GM10248 (cell line): ENCODE measurements at regions of chr11 and their contacts with region 1.

Region 1: DNA sequence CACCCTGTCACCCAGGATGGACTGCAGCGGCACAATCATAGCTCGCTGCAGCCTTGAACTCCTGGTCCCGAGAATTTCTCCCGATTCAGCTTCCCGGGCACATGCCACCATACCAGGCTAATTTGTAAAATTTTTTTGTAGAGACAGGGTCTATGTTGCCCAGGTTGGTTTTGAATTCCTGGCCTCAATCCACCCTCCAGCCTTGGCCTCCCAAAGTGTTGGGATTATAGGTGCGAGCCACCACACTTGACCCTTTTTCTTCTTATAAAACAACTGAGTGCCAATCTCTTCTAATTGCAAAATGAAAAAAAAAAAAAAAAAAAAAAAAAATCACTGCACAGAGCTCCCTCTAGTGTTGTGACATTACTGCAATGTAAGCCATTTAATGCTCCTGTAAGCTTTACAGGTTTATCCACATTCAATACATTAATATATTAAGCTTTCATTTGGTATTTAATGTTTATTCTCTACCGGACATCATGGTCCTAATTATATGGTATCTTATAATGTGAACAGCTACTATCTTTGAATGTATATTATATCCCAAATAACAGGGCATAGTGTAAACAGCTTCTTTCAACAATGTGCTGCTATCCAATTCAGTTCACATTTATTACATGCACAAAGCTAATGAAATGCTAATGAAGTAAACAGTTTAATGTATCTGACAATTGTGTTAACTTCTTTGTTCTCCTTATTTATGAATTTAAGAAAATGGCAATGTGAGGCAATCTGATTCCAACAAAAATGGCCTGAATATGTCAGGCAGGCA is 44.6 kb downstream of the COPB1 start:
- DNase-seq: peak; percentile 34
- CTCF ChIP-seq: peak; percentile 46

Region 2: DNA sequence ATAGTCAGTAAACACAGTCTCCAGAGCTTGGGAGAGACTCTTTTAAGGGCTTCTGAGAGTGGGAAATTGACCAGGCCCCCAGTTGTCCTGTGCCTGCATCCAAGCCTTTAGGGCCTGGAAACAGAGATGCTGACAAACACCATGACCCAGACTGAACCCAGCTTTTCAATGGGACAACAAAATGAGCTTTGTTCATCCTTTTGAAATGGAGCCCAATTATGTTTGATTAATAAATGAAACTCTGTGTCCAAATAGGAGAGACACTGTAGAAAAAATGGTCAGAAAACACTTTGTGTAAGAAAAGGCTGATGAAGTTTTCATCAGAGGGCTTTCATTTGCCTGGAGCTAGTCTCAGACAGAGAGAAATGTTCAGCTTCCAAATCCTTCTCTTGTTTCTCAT is 242.1 kb before region 1 on chr11:
- CTCF ChIA-PET with region 1: no interaction called
- POLR2A ChIA-PET with region 1: no interaction called
- DNase-seq: no peak
- CTCF ChIP-seq: no peak

Region 3: DNA sequence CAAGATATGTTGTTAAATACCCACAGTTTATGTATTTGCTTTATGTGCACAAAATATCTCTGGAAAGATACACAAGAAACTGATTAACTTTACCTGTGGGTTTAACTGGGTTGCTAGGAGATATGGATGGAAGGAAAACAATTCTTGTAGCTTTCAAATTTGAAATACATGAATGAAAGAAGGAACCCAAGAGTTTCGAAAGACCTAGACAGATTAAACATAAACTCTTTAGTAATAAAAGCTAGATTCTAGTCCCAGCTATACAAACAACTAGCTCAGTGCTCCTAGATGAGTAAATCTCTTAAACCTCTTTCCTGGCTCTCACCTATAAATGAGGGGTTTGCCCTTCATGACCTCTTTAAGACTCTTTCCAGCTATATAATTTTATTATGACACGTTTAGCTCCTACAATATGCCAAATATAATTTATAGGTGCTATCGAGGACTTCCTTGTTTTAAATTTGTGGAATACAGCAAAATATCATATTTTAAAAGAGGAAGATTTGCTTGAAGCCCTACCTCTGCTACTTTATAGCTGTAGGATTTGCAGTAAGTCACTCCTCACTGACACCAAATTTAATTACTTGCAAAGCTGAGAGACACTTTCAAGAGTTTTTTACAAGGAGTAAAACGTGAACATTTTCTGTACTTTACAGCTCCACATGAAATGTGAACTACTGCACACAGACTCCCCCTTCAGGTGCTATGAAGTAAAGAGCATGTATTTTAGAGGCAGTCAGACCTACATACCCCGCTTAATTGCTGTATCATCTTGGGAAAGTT is 146.7 kb before region 1 on chr11:
- CTCF ChIA-PET with region 1: interaction called, 109 read pairs
- POLR2A ChIA-PET with region 1: no interaction called
- DNase-seq: no peak
- CTCF ChIP-seq: peak; percentile 72

Region 4: DNA sequence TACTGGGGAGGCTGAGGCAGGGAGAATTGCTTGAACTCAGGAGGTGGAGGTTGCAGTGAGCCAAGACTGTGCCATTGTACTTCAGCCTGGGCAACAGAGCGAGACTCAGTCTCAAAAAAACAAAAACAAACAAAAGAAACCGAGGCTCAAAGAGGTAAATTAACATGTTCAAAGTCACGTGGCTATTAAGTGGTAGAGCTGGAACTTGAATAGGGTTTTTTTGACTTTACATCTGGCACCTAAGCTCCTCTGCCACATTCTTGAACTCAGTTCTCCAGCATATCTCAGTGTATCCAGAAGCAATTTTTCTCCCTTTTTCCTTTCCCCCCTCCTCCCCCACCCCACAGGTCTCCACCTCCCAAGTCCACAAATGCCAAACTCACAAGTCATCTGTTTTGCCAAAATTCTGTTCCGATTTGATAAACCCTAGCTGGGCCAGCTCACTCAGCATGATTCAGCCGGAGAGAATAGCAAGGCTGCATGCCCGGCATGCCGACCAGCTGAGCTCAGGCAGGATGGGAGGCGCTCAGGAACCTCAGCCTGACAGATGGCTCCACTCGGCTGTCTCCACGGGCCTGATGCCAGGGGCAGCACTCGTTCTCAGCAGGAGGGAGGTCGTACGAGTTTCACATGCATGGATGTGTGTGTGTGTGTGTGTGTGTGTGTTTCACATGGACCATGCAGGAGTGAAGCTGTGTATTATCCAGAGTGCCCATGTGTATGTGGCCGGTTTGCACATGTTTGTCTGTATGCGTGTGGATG is 32.8 kb before region 1 on chr11:
- CTCF ChIA-PET with region 1: interaction called, 12 read pairs
- POLR2A ChIA-PET with region 1: no interaction called
- DNase-seq: no peak
- CTCF ChIP-seq: no peak

Region 5: GRCh38 chr11:14443638-14444037 is 11.4 kb before region 1 on chr11:
- CTCF ChIA-PET with region 1: interaction called, 14 read pairs
- POLR2A ChIA-PET with region 1: no interaction called
- DNase-seq: no peak
- CTCF ChIP-seq: no peak

Region 6: DNA sequence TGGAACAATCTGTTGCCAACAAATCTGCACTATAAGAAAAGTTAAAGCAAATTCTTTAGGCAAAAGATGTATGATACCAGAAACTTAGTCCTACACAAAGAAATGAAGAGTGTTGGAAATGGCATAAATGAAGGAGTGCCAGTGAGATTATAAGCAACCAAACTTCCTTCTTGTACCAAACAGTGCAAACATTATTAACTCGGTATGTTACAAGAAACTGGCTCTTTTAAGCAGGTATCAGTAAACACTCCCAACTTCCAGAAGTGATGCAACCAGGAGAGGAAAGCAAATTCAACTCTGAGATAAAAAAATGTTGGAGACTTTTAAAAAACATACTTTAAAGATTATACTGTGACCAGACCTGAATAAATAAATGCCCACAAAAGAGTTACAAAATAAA is 16.1 kb after region 1 on chr11:
- CTCF ChIA-PET with region 1: interaction called, 34 read pairs
- POLR2A ChIA-PET with region 1: interaction called, 4 read pairs
- DNase-seq: no peak
- CTCF ChIP-seq: no peak